Common myeloid progenitor, CD34-positive (primary cell): ENCODE measurements at regions of chrX and their contacts with region 1.

Region 1: GRCh38 chrX:25144043-25144940 is 128.5 kb upstream of the ARX start:
- DNase-seq: peak; percentile 34 to 50 (median 45)
- H3K4me3 ChIP-seq: peak overlapping the region in 2 of 7 experiments; percentile 5 to 12
- H3K27ac ChIP-seq: no peak overlapping the region
- H3K4me1 ChIP-seq: peaks cover 0 to 3% (median 0%) of the 10 kb centered on the region in 4 experiments
- H3K27me3 ChIP-seq: peaks cover 0 to 20% (median 9%) of the 10 kb centered on the region in 5 experiments

Region 2: GRCh38 chrX:25034889-25035288 is 109.4 kb before region 1 on chrX:
- CTCF ChIA-PET with region 1: interaction called, 15 read pairs
- POLR2A ChIA-PET with region 1: no interaction called
- DNase-seq: no peak
- H3K4me3 ChIP-seq: no peak overlapping the region
- H3K27ac ChIP-seq: no peak overlapping the region
- H3K4me1 ChIP-seq: no peaks in the 10 kb centered on the region
- H3K27me3 ChIP-seq: peaks cover 0 to 2% (median 0%) of the 10 kb centered on the region in 5 experiments